ENCODE measurements at regions of chr11 and their contacts with region 1.

Region 1: GRCh38 chr11:102451681-102452460 is 694 bp downstream of the TMEM123 start:
- DNase-seq: peak; percentile 85
- H3K4me3 Mint-ChIP-seq: peak overlapping the region; percentile 96
- H3K27ac Mint-ChIP-seq: peak overlapping the region; percentile 93
- H3K4me1 Mint-ChIP-seq: peaks cover 77% of the 10 kb centered on the region
- H3K27me3 Mint-ChIP-seq: no peaks in the 10 kb centered on the region

Region 2: GRCh38 chr11:102317099-102317767 is 134.6 kb before region 1 on chr11 and contains the start of gene BIRC3:
- CTCF ChIA-PET with region 1: interaction called, 3 read pairs
- POLR2A ChIA-PET with region 1: interaction called, 17 read pairs
- DNase-seq: peak; percentile 92
- H3K4me3 Mint-ChIP-seq: peak within 1 kb of the TSS; percentile 94
- H3K27ac Mint-ChIP-seq: peak within 1 kb of the TSS; percentile 91
- H3K4me1 Mint-ChIP-seq: peaks cover 69% of the 10 kb centered on the region
- H3K27me3 Mint-ChIP-seq: no peaks in the 10 kb centered on the region
- total RNA-seq, gene BIRC3: 79.0 to 80.0 TPM

Region 3: DNA sequence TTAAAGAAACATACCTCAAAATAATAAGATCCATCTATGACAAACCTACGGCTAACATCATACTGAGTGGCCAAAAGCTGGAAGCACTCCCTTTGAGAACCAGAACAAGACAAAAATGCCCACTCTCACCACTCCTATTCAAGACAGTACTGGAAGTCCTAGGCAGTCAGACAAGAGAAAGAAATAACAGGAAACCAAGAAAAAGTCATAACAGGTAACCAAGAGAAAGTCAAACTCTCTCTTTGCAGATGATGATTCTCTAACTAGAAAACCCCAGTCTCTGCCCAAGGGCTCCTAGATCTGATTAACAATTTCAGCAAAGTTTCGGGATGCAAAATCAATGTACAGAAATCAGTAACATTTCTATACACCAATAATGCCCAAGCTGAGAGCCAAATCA is 34.9 kb before region 1 on chr11:
- CTCF ChIA-PET with region 1: interaction called, 8 read pairs
- POLR2A ChIA-PET with region 1: interaction called, 10 read pairs
- DNase-seq: no peak
- H3K4me3 Mint-ChIP-seq: no peak overlapping the region
- H3K27ac Mint-ChIP-seq: peak overlapping the region; percentile 37
- H3K4me1 Mint-ChIP-seq: peaks cover 66% of the 10 kb centered on the region
- H3K27me3 Mint-ChIP-seq: no peaks in the 10 kb centered on the region

Region 4: GRCh38 chr11:102476812-102477211 is 24.9 kb after region 1 on chr11:
- CTCF ChIA-PET with region 1: interaction called, 3 read pairs
- POLR2A ChIA-PET with region 1: interaction called, 18 read pairs
- DNase-seq: peak; percentile 57
- H3K4me3 Mint-ChIP-seq: no peak overlapping the region
- H3K27ac Mint-ChIP-seq: peak overlapping the region; percentile 59
- H3K4me1 Mint-ChIP-seq: peaks cover 41% of the 10 kb centered on the region
- H3K27me3 Mint-ChIP-seq: no peaks in the 10 kb centered on the region